GM10248 (cell line): ENCODE measurements at regions of chr6 and their contacts with region 1.

Region 1: DNA sequence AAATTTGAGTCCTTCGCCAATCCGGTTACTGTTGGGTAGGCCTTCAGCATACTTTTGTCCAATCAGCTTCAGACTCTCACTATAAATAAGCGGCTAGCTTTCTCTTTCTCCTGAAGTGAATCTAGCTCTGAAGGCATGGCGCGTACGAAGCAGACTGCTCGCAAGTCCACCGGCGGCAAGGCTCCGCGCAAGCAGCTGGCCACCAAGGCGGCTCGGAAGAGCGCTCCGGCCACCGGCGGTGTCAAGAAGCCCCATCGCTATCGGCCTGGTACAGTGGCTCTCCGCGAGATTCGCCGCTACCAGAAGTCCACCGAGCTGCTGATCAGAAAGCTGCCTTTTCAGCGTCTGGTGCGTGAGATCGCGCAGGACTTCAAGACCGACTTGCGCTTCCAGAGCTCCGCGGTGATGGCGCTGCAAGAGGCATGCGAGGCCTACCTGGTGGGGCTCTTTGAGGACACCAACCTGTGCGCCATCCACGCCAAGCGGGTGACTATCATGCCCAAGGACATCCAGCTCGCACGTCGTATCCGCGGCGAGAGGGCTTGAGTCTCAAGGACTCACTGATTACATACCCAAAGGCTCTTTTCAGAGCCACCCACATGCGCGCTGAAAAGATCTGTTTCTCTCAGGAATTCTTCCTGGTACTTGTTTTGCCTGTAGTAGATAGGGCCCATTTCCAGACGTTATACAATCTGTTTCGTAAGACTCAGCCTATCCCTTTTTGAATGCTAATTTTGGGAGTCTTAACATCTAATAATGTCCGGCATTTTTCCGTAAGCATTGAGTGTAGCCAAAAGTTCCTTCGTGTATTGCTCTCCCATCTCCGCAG is 102.0 kb downstream of the OR2B2 start:
- DNase-seq: peak; percentile 77
- CTCF ChIP-seq: peak; percentile 21

Region 2: GRCh38 chr6:27146706-27147505 is 663.2 kb before region 1 on chr6:
- CTCF ChIA-PET with region 1: no interaction called
- POLR2A ChIA-PET with region 1: interaction called, 31 read pairs
- DNase-seq: peak; percentile 95
- CTCF ChIP-seq: no peak

Region 3: GRCh38 chr6:27785294-27785693 is 24.9 kb before region 1 on chr6:
- CTCF ChIA-PET with region 1: no interaction called
- POLR2A ChIA-PET with region 1: no interaction called
- DNase-seq: no peak
- CTCF ChIP-seq: no peak

Region 4: GRCh38 chr6:27795697-27796494 is 14.3 kb before region 1 on chr6:
- CTCF ChIA-PET with region 1: interaction called, 26 read pairs
- POLR2A ChIA-PET with region 1: interaction called, 11 read pairs
- DNase-seq: peak; percentile 63
- CTCF ChIP-seq: peak; percentile 76

Region 5: DNA sequence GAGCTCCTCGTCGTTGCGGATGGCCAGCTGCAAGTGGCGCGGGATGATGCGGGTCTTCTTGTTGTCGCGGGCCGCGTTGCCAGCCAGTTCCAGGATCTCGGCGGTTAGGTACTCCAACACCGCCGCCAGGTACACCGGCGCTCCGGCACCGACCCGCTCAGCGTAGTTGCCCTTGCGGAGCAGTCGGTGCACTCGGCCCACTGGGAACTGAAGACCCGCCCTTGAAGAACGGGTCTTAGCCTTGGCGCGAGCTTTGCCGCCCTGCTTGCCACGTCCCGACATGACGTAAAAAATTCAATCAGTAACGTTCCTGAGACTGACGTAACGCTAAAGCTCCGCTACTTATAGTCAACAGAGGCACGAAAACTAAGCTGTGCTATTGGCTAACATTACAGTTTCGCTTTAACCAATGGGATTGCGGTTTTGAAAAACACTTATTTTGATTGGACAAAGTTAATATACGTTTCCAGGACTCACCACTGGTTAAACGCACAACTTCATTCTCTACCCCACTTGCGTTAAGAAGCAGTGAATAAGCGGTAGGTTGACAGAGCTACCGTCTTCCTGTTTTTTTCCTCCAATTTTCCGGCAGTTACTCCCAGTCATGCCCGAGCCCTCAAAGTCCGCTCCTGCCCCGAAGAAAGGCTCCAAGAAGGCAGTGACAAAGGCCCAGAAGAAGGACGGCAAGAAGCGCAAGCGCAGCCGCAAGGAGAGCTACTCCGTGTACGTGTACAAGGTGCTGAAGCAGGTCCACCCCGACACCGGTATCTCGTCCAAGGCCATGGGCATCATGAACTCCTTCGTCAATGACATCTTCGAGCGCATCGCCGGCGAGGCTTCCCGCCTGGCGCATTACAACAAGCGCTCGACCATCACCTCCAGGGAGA is 28.1 kb after region 1 on chr6:
- CTCF ChIA-PET with region 1: interaction called, 4 read pairs
- POLR2A ChIA-PET with region 1: interaction called, 120 read pairs
- DNase-seq: peak; percentile 89
- CTCF ChIP-seq: no peak

Region 6: GRCh38 chr6:27871924-27872638 is 61.9 kb after region 1 on chr6:
- CTCF ChIA-PET with region 1: interaction called, 9 read pairs
- POLR2A ChIA-PET with region 1: interaction called, 69 read pairs
- DNase-seq: peak; percentile 86
- CTCF ChIP-seq: peak; percentile 56